Vagina (tissue), 2 donors: ENCODE measurements at regions of chr17 and their contacts with region 1.

Region 1: GRCh38 chr17:56592487-56593085 is 913 bp upstream of the NOG start:
- DNase-seq: no peak
- H3K4me3 ChIP-seq: peak overlapping the region; percentile 56 to 70
- H3K27ac ChIP-seq: peak overlapping the region; percentile 83
- H3K4me1 ChIP-seq: peaks cover 35% of the 10 kb centered on the region
- H3K27me3 ChIP-seq: no peaks in the 10 kb centered on the region
- CTCF ChIP-seq: peak; percentile 58 to 97 (median 66)
- POLR2A ChIP-seq: no peak

Region 2: GRCh38 chr17:56629531-56630075 is 37.0 kb after region 1 on chr17:
- intact Hi-C with region 1: no loop called
- DNase-seq: no peak
- H3K4me3 ChIP-seq: peak overlapping the region in 1 of 2 donors; percentile 30
- H3K27ac ChIP-seq: peak overlapping the region; percentile 27
- H3K4me1 ChIP-seq: peaks cover 11% of the 10 kb centered on the region
- H3K27me3 ChIP-seq: no peaks in the 10 kb centered on the region
- CTCF ChIP-seq: peak in 1 of 3 experiments; percentile 24
- POLR2A ChIP-seq: no peak

Region 3: GRCh38 chr17:56715613-56716357 is 123.2 kb after region 1 on chr17:
- intact Hi-C with region 1: loop called (anchors 5 kb)
- DNase-seq: no peak
- H3K4me3 ChIP-seq: no peak overlapping the region
- H3K27ac ChIP-seq: no peak overlapping the region
- H3K4me1 ChIP-seq: no peaks in the 10 kb centered on the region
- H3K27me3 ChIP-seq: no peaks in the 10 kb centered on the region
- CTCF ChIP-seq: peak; percentile 46 to 84 (median 82)
- POLR2A ChIP-seq: no peak

Region 4: DNA sequence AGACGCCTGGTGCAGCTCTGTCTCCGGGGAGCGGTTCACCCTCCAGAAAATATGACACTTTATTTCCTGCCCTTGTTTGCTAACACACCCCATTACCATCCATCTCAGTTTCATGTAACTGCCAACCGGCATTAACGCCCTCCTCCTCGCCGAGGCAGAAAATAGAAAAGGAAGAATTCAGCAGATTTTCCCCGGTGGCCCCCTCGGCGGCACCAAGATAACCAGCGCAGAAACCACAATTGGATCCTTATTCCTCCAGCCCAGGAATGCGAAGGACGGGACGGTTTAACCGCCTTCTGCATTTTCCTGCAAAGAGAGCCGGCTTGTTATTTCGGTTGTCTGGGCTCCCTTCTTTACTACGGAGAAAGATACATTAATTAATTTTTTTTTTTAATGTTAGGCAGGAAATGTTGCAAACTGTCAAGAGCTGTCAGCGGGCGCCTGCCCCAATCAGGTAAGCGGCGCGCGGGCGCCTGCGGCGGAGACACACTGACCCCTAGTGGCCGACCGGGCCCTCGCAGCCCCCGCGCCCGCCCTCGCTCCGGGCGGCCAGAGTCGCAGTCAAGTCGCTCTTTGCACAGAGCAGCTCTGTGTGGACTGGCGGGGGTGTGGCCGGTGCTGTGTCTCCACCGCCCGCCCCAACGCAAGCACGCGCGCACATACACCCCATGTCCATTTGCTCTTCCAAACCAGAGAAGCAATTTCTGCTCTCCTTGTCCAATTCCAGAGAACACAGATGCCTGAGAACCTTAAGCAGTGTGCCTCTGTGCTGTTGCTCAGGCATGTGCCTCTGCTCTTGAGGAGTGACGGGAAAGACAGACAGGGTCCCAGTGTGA is 187.5 kb after region 1 on chr17:
- intact Hi-C with region 1: loop called (anchors 10 kb)
- DNase-seq: no peak
- H3K4me3 ChIP-seq: peak overlapping the region; percentile 11 to 28
- H3K27ac ChIP-seq: no peak overlapping the region
- H3K4me1 ChIP-seq: peaks cover 15% of the 10 kb centered on the region
- H3K27me3 ChIP-seq: no peaks in the 10 kb centered on the region
- CTCF ChIP-seq: peak; percentile 68 to 97 (median 89)
- POLR2A ChIP-seq: no peak